CD4-positive, alpha-beta memory T cell (primary cell): ENCODE measurements at regions of chr7 and their contacts with region 1.

Region 1: DNA sequence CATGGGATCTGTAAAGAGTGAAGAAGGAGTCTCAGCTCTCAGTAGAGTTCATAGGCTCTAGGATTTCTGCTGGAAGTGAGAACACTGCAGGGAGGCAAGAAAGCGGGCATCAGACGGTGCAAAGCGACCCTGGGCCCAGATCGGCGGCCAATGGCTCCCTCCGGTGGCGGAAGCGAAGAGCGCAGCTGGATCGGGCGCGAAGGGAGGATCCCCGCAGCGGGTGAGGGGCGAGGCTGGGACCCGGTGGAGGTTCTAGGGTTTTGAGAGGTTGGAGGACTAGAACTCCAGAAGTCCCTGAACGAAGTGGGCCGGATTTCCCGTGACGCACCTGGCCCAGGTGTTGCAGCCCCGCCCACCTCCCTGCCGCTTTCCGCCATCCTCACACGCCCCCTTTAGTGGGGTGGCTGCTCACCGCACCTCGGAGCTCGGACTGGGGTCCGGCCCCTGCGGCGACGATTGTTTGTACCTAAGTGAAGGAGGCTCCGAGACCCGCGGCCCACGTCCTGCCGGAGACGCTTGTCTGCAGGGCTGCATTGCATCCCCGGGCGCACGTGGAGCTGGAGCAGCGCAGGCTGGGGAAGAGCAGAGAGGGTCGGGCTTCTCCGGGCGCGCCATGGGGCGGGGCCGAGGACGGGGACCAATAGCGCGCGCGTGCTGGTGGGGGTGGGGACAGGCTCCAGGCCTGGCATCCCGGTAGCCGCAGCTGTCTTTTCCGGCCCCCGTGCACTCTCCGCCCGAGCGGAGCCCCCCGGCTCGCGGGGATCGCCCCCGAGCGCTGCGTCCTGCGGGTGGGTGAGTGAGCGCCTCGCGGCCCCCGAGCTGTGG is at the start of gene SLC12A9:
- DNase-seq: peak; percentile 83 to 91 (median 88)
- H3K4me3 ChIP-seq: peak within 1 kb of the TSS; percentile 84 to 86
- H3K4me3 Mint-ChIP-seq: peak within 1 kb of the TSS; percentile 88 to 96 (median 92)
- H3K27ac ChIP-seq: peak within 1 kb of the TSS; percentile 51
- H3K27ac Mint-ChIP-seq: peak within 1 kb of the TSS; percentile 88 to 95 (median 93)
- H3K4me1 ChIP-seq: peaks cover 25% of the 10 kb centered on the region
- H3K4me1 Mint-ChIP-seq: peaks cover 11 to 36% (median 20%) of the 10 kb centered on the region in 4 donors
- H3K27me3 ChIP-seq: no peaks in the 10 kb centered on the region
- H3K27me3 Mint-ChIP-seq: no peaks in the 10 kb centered on the region
- total RNA-seq, gene SLC12A9: 63.7 to 64.6 TPM

Region 2: DNA sequence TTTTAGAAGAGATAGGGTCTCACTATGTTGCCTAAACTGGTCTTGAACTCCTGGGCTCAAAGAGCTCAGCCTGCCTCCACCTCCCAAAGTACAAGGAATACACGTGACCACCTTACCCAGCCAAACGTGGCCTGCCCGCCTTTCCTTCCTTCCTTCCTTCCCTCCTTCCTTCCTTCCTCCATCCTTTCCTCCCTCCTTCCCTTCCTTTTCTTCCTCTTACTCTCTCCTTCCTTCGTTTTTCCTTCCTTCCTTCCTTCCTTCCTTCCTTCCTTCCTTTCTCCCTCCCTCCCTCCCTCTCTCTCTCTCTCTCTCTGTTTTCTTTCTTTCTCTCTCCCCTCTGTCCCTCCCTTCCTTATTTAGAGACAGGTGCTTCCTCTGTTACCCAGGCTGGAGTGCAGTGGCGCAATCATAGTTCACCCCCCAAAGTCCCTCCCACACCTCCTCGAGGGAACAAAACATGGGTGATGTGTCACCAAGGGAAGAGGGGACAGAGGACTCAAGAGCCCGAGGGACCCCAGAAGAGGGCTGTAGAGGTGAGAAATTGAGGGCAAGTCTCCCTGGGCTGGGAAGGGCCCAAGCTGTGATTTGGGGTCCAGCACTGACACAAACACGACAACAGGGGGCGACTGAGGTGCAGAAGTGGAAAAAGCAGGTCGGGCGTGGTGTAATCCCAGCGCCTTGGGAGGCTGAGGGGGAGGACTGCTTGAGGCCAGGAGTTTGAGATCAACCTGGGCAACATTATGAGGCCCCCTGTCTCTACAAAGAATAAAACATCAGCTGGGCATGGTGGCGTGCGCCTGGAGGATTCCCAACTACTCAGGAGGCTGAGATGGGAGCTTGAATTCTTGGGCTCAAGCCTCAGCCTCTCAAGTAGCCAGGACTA is 53.0 kb before region 1 on chr7:
- CTCF ChIA-PET with region 1: interaction called, 59 read pairs
- POLR2A ChIA-PET with region 1: interaction called, 9 read pairs
- intact Hi-C with region 1: loop called (anchors 1 kb)
- DNase-seq: peak in 4 of 5 donors; percentile 28 to 43 (median 33)
- H3K4me3 ChIP-seq: no peak overlapping the region
- H3K4me3 Mint-ChIP-seq: no peak overlapping the region
- H3K27ac ChIP-seq: no peak overlapping the region
- H3K27ac Mint-ChIP-seq: peak overlapping the region in 3 of 7 donors; percentile 42 to 94 (median 55)
- H3K4me1 ChIP-seq: no peaks in the 10 kb centered on the region
- H3K4me1 Mint-ChIP-seq: peaks cover 0 to 8% (median 0%) of the 10 kb centered on the region in 4 donors
- H3K27me3 ChIP-seq: no peaks in the 10 kb centered on the region
- H3K27me3 Mint-ChIP-seq: peaks cover 9 to 12% of the 10 kb centered on the region in 2 donors

Region 3: GRCh38 chr7:100825830-100826513 is 26.3 kb before region 1 on chr7:
- CTCF ChIA-PET with region 1: no interaction called
- POLR2A ChIA-PET with region 1: no interaction called
- intact Hi-C with region 1: no loop called
- DNase-seq: no peak
- H3K4me3 ChIP-seq: no peak overlapping the region
- H3K4me3 Mint-ChIP-seq: peak overlapping the region; percentile 68 to 89 (median 74)
- H3K27ac ChIP-seq: no peak overlapping the region
- H3K27ac Mint-ChIP-seq: no peak overlapping the region
- H3K4me1 ChIP-seq: peaks cover 13% of the 10 kb centered on the region
- H3K4me1 Mint-ChIP-seq: peaks cover 14 to 25% (median 21%) of the 10 kb centered on the region in 4 donors
- H3K27me3 ChIP-seq: peaks cover 4% of the 10 kb centered on the region
- H3K27me3 Mint-ChIP-seq: peaks cover 25 to 28% of the 10 kb centered on the region in 2 donors

Region 4: DNA sequence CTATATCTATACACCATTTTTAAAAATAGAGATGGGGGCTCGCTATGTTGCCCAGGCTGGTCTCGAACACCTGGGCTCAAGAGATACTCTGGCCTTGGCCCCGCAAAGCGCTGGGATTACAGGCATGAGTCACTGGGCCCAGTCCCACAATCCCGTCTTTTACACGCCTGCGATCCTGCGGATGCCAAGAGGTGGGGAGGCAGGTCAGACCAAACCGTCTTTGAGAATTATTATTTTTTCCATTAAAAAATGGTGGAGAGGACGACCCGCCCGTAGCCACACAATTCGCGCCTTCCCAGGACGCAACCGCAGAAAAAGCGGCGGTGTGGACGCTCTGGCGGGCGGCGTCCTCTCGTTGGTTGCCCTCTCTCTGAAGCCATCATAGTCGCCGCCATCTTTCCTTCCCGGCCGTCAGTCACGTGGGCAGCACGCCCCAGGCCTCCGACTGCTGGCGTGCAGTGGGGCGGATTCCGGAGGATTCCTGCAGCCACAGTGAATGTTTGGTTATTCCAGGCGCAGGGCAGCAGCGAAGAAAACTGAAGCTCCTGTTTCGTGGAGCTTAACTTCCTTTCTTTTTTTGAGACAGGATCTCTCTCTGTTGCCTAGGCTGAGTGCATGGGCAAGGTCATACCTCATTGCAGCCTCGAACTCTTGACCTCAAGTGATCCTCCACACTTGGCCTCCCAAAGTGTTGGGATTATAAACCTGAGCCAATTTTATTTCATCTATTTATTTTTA is 15.0 kb before region 1 on chr7:
- CTCF ChIA-PET with region 1: interaction called, 17 read pairs
- POLR2A ChIA-PET with region 1: interaction called, 5 read pairs
- intact Hi-C with region 1: loop called (anchors 1 kb)
- DNase-seq: peak; percentile 57 to 71 (median 65)
- H3K4me3 ChIP-seq: peak overlapping the region in 1 of 2 donors; percentile 51
- H3K4me3 Mint-ChIP-seq: peak overlapping the region; percentile 75 to 90 (median 85)
- H3K27ac ChIP-seq: peak overlapping the region; percentile 37
- H3K27ac Mint-ChIP-seq: peak overlapping the region; percentile 64 to 92 (median 88)
- H3K4me1 ChIP-seq: peaks cover 9% of the 10 kb centered on the region
- H3K4me1 Mint-ChIP-seq: peaks cover 2 to 21% (median 7%) of the 10 kb centered on the region in 4 donors
- H3K27me3 ChIP-seq: no peaks in the 10 kb centered on the region
- H3K27me3 Mint-ChIP-seq: peaks cover 0 to 2% of the 10 kb centered on the region in 2 donors

Region 5: GRCh38 chr7:100863406-100863950 is 11.2 kb after region 1 on chr7:
- CTCF ChIA-PET with region 1: interaction called, 10 read pairs
- POLR2A ChIA-PET with region 1: interaction called, 5 read pairs
- intact Hi-C with region 1: no loop called
- DNase-seq: no peak
- H3K4me3 ChIP-seq: no peak overlapping the region
- H3K4me3 Mint-ChIP-seq: no peak overlapping the region
- H3K27ac ChIP-seq: no peak overlapping the region
- H3K27ac Mint-ChIP-seq: no peak overlapping the region
- H3K4me1 ChIP-seq: peaks cover 10% of the 10 kb centered on the region
- H3K4me1 Mint-ChIP-seq: peaks cover 4 to 15% (median 6%) of the 10 kb centered on the region in 4 donors
- H3K27me3 ChIP-seq: no peaks in the 10 kb centered on the region
- H3K27me3 Mint-ChIP-seq: no peaks in the 10 kb centered on the region

Region 6: GRCh38 chr7:100874577-100875355 is 22.5 kb after region 1 on chr7 and contains the start of gene SRRT:
- CTCF ChIA-PET with region 1: interaction called, 30 read pairs
- POLR2A ChIA-PET with region 1: interaction called, 35 read pairs
- intact Hi-C with region 1: loop called (anchors 1 kb)
- DNase-seq: peak; percentile 98
- H3K4me3 ChIP-seq: peak within 1 kb of the TSS; percentile 92 to 99
- H3K4me3 Mint-ChIP-seq: peak within 1 kb of the TSS; percentile 98 to 99 (median 99)
- H3K27ac ChIP-seq: peak within 1 kb of the TSS; percentile 91
- H3K27ac Mint-ChIP-seq: peak within 1 kb of the TSS; percentile 96 to 99 (median 98)
- H3K4me1 ChIP-seq: peaks cover 49% of the 10 kb centered on the region
- H3K4me1 Mint-ChIP-seq: peaks cover 26 to 61% (median 47%) of the 10 kb centered on the region in 4 donors
- H3K27me3 ChIP-seq: no peaks in the 10 kb centered on the region
- H3K27me3 Mint-ChIP-seq: no peaks in the 10 kb centered on the region
- total RNA-seq, gene SRRT: 264 to 272 TPM

Region 7: DNA sequence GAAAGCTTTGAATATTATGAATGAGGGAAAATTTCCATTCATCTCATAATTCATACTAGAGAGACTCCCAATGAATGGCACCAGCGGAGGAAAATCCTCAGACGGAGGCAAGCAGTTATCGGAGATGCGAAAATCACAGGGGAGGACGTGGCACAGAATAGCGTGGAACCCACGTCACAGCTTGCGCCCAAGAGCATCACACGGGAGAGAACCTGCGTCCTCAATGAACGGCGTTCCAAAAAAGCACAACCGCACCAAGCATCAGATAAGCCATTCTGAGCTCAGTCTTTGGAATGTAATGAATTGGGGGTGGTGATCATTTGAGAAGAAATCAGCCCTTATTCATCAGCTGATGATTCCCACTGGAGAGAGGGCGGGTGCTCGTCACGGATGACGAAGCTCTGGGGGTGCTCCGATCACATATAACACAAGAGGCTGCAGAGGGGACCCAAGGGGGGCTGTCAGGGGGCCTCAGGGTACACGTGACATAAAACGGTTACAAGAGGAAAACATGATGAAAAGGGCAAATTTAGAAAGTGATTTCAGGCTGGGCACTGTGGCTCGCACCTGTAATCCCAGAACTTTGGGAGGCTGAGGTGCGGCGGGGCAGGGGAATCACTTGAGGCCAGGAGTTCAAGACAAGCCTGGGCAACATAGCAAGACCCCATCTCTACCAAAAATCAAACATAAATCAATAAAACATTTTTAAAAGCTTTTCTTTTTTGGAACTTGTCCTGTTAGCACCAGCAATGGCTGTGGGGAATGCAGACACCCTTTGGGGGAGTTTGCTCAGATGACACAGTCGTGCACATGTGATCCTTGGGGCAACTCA is 426.4 kb after region 1 on chr7:
- CTCF ChIA-PET with region 1: no interaction called
- POLR2A ChIA-PET with region 1: no interaction called
- intact Hi-C with region 1: no loop called
- DNase-seq: no peak
- H3K4me3 ChIP-seq: no peak overlapping the region
- H3K4me3 Mint-ChIP-seq: no peak overlapping the region
- H3K27ac ChIP-seq: no peak overlapping the region
- H3K27ac Mint-ChIP-seq: no peak overlapping the region
- H3K4me1 ChIP-seq: peaks cover 5% of the 10 kb centered on the region
- H3K4me1 Mint-ChIP-seq: peaks cover 4 to 8% (median 7%) of the 10 kb centered on the region in 4 donors
- H3K27me3 ChIP-seq: no peaks in the 10 kb centered on the region
- H3K27me3 Mint-ChIP-seq: peaks cover 8 to 26% of the 10 kb centered on the region in 2 donors